Activated T-helper 1 cell treated with anti-CD3 and anti-CD28 coated beads, Interleukin-12 subunit alpha, Interleukin-12 subunit beta, Interleukin-2, Interleukin-4 antibody, amounts not matched to agents 30 ng/mL and 10 ng/mL and 1 ng/mL, durations not matched to agents 14 hours and 24 hours and 36 hours (primary cell): ENCODE measurements at regions of chr18 and their contacts with region 1.

Region 1: DNA sequence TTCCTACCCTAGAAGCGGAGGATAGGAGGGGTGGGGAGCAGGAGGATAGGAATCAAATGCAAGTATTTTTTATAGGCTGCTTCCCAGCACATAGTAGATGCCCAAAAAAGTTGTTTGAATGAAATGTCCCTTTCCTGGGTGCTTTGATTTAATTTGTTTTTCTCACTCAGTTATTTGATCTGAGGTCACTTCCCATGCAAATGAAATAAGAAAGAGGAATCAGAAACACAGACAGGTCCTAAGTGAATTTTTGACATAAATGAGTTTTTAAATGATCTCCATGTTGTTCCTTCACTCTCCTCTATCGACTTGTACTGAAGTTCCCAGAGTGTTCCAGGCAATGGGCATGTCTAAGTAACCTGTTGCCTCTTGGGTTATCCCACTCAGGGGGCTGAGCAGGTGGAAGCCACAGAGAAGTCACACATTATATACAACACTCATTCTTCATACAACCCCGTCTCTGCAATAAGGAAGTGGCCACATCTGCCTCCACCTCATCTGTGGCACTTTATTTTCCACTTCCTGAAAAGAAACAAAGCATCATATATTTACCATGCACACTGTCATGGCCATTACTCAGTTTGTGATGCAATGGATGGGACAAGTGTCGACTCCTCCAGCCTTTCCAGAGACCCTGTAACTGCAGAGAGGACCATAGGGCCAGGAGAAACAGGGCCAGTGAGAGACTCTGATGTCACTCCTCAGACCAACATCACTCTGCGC is 81.9 kb upstream of the ZNF397 start:
- DNase-seq: peak; percentile 17
- H3K4me3 Mint-ChIP-seq: no peak overlapping the region
- H3K27ac Mint-ChIP-seq: peak overlapping the region; percentile 89
- H3K4me1 Mint-ChIP-seq: peaks cover 29% of the 10 kb centered on the region
- H3K27me3 Mint-ChIP-seq: no peaks in the 10 kb centered on the region

Region 2: GRCh38 chr18:35029770-35030169 is 129.1 kb before region 1 on chr18:
- intact Hi-C with region 1: no loop called
- DNase-seq: no peak
- H3K4me3 Mint-ChIP-seq: peak overlapping the region; percentile 77
- H3K27ac Mint-ChIP-seq: peak overlapping the region; percentile 95
- H3K4me1 Mint-ChIP-seq: peaks cover 42% of the 10 kb centered on the region
- H3K27me3 Mint-ChIP-seq: no peaks in the 10 kb centered on the region

Region 3: DNA sequence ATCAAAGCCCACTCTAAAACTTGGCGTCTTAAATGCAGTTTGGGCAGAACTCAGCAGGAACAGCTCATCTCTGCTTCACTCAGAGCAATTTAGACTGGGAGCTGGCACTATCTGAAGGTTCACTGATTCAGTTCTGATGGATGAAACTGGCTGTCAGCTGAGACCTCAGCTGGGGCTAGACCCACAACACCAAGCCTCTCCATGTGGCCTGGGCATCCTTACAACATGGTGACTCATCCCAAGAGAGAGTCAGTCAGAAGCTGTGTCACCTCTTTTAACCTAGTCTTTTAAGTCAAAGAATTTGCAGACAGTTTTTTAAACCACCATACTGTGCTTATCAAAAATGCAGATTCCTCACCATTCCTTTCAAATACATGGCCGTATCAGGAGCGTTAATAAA is 19.4 kb after region 1 on chr18:
- intact Hi-C with region 1: loop called (anchors 2 kb)
- DNase-seq: no peak
- H3K4me3 Mint-ChIP-seq: no peak overlapping the region
- H3K27ac Mint-ChIP-seq: no peak overlapping the region
- H3K4me1 Mint-ChIP-seq: peaks cover 10% of the 10 kb centered on the region
- H3K27me3 Mint-ChIP-seq: no peaks in the 10 kb centered on the region